GM12878 (cell line): ENCODE measurements at regions of chr7 and their contacts with region 1.

Region 1: GRCh38 chr7:56074371-56074791 is 10.3 kb downstream of the SUMF2 start:
- DNase-seq: no peak
- ATAC-seq: peak; percentile 99
- H3K4me3 ChIP-seq: no peak overlapping the region
- H3K27ac ChIP-seq: no peak overlapping the region
- H3K4me1 ChIP-seq: no peaks in the 10 kb centered on the region
- H3K27me3 ChIP-seq: no peaks in the 10 kb centered on the region
- CTCF ChIP-seq: peak; percentile 85 to 90 (median 86)
- EP300 ChIP-seq: no peak
- POLR2A ChIP-seq: no peak
- RAD21 ChIP-seq: peak; percentile 91

Region 2: GRCh38 chr7:55641273-55641691 is 433.1 kb before region 1 on chr7:
- CTCF ChIA-PET with region 1: interaction called, 25 read pairs
- POLR2A ChIA-PET with region 1: no interaction called
- RAD21 ChIA-PET with region 1: interaction called, 14 read pairs
- SMC1A ChIA-PET with region 1: interaction called, 23 read pairs
- in situ Hi-C with region 1: loop called (anchors 5 kb)
- intact Hi-C with region 1: loop called (anchors 1 kb)
- DNase-seq: peak; percentile 65
- ATAC-seq: peak; percentile 95
- H3K4me3 ChIP-seq: no peak overlapping the region
- H3K27ac ChIP-seq: no peak overlapping the region
- H3K4me1 ChIP-seq: peaks cover 3% of the 10 kb centered on the region
- H3K27me3 ChIP-seq: no peaks in the 10 kb centered on the region
- CTCF ChIP-seq: peak; percentile 74 to 89 (median 76)
- EP300 ChIP-seq: no peak
- POLR2A ChIP-seq: no peak
- RAD21 ChIP-seq: peak; percentile 99

Region 3: GRCh38 chr7:55912748-55913158 is 161.6 kb before region 1 on chr7:
- CTCF ChIA-PET with region 1: no interaction called
- POLR2A ChIA-PET with region 1: no interaction called
- RAD21 ChIA-PET with region 1: no interaction called
- SMC1A ChIA-PET with region 1: no interaction called
- in situ Hi-C with region 1: no loop called
- intact Hi-C with region 1: no loop called
- DNase-seq: no peak
- ATAC-seq: no peak
- H3K4me3 ChIP-seq: no peak overlapping the region
- H3K27ac ChIP-seq: no peak overlapping the region
- H3K4me1 ChIP-seq: peaks cover 3% of the 10 kb centered on the region; the same call in 1 of the 2 replicates
- H3K27me3 ChIP-seq: no peaks in the 10 kb centered on the region
- CTCF ChIP-seq: no peak
- EP300 ChIP-seq: no peak
- POLR2A ChIP-seq: no peak
- RAD21 ChIP-seq: no peak

Region 4: GRCh38 chr7:55951637-55952351 is 122.6 kb before region 1 on chr7 and contains the start of gene MRPS17:
- CTCF ChIA-PET with region 1: no interaction called
- POLR2A ChIA-PET with region 1: interaction called, 10 read pairs
- RAD21 ChIA-PET with region 1: no interaction called
- SMC1A ChIA-PET with region 1: no interaction called
- in situ Hi-C with region 1: no loop called
- intact Hi-C with region 1: loop called (anchors 5 kb)
- DNase-seq: peak; percentile 72
- ATAC-seq: peak; percentile 100
- H3K4me3 ChIP-seq: peak within 1 kb of the TSS; percentile 97
- H3K27ac ChIP-seq: peak within 1 kb of the TSS; percentile 87
- H3K4me1 ChIP-seq: no peaks in the 10 kb centered on the region
- H3K27me3 ChIP-seq: no peaks in the 10 kb centered on the region
- CTCF ChIP-seq: no peak
- EP300 ChIP-seq: no peak
- POLR2A ChIP-seq: peak; percentile 99
- RAD21 ChIP-seq: no peak
- polyA plus RNA-seq, gene MRPS17: 72.9 to 74.5 TPM

Region 5: GRCh38 chr7:56009695-56010094 is 64.7 kb before region 1 on chr7:
- CTCF ChIA-PET with region 1: interaction called, 95 read pairs
- POLR2A ChIA-PET with region 1: no interaction called
- RAD21 ChIA-PET with region 1: interaction called, 18 read pairs
- SMC1A ChIA-PET with region 1: interaction called, 5 read pairs
- in situ Hi-C with region 1: loop called (anchors 5 kb)
- intact Hi-C with region 1: loop called (anchors 1 kb)
- DNase-seq: no peak
- ATAC-seq: no peak
- H3K4me3 ChIP-seq: no peak overlapping the region
- H3K27ac ChIP-seq: no peak overlapping the region
- H3K4me1 ChIP-seq: no peaks in the 10 kb centered on the region
- H3K27me3 ChIP-seq: no peaks in the 10 kb centered on the region
- CTCF ChIP-seq: no peak
- EP300 ChIP-seq: no peak
- POLR2A ChIP-seq: no peak
- RAD21 ChIP-seq: no peak

Region 6: GRCh38 chr7:56092789-56093531 is 18.6 kb after region 1 on chr7 and contains the start of gene PHKG1:
- CTCF ChIA-PET with region 1: interaction called, 12 read pairs
- POLR2A ChIA-PET with region 1: no interaction called
- RAD21 ChIA-PET with region 1: interaction called, 3 read pairs
- SMC1A ChIA-PET with region 1: interaction called, 4 read pairs
- in situ Hi-C with region 1: no loop called
- intact Hi-C with region 1: no loop called
- DNase-seq: no peak
- ATAC-seq: peak; percentile 43
- H3K4me3 ChIP-seq: no peak within 1 kb of the TSS
- H3K27ac ChIP-seq: no peak within 1 kb of the TSS
- H3K4me1 ChIP-seq: no peaks in the 10 kb centered on the region
- H3K27me3 ChIP-seq: no peaks in the 10 kb centered on the region
- CTCF ChIP-seq: no peak
- EP300 ChIP-seq: no peak
- POLR2A ChIP-seq: no peak
- RAD21 ChIP-seq: no peak
- polyA plus RNA-seq, gene PHKG1: 0.08 to 0.09 TPM